Sigmoid colon (tissue), 7 donors: ENCODE measurements at regions of chr10 and their contacts with region 1.

Region 1: DNA sequence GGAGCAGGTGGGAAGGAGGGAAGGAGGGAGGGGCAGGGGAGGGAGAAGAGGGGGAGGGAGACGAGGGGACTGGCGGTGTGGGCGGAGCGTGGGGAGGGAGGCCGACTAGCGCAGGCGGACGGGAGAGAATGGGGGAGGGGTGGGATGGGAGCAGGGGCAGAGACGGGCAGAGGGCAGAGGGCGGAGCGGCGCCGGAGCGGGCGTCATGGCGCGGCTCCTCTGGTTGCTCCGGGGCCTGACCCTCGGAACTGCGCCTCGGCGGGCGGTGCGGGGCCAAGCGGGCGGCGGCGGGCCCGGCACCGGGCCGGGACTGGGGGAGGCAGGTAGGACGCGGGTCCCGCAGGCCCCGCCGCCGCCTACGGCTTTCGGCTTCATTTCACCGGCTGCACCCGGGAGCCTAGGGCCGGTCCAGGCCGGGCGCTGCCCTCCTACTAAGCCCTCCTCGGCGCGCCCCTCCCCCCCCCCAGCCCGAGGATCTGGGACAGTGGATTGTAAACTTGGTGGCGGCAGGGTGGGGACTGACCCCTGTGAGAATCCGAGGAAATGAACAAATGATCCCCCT is at the start of gene MSRB2:
- DNase-seq: peak; percentile 98
- H3K4me3 ChIP-seq: peak within 1 kb of the TSS; percentile 62 to 95 (median 79)
- H3K27ac ChIP-seq: peak within 1 kb of the TSS; percentile 90 to 99 (median 96)
- H3K4me1 ChIP-seq: peaks cover 0 to 17% (median 12%) of the 10 kb centered on the region in 4 donors
- H3K27me3 ChIP-seq: no peaks in the 10 kb centered on the region
- CTCF ChIP-seq: no peak
- EP300 ChIP-seq: no peak
- POLR2A ChIP-seq: peak; percentile 45 to 55
- total RNA-seq, gene MSRB2: 32.7 to 56.3 (median 47.0) TPM

Region 2: DNA sequence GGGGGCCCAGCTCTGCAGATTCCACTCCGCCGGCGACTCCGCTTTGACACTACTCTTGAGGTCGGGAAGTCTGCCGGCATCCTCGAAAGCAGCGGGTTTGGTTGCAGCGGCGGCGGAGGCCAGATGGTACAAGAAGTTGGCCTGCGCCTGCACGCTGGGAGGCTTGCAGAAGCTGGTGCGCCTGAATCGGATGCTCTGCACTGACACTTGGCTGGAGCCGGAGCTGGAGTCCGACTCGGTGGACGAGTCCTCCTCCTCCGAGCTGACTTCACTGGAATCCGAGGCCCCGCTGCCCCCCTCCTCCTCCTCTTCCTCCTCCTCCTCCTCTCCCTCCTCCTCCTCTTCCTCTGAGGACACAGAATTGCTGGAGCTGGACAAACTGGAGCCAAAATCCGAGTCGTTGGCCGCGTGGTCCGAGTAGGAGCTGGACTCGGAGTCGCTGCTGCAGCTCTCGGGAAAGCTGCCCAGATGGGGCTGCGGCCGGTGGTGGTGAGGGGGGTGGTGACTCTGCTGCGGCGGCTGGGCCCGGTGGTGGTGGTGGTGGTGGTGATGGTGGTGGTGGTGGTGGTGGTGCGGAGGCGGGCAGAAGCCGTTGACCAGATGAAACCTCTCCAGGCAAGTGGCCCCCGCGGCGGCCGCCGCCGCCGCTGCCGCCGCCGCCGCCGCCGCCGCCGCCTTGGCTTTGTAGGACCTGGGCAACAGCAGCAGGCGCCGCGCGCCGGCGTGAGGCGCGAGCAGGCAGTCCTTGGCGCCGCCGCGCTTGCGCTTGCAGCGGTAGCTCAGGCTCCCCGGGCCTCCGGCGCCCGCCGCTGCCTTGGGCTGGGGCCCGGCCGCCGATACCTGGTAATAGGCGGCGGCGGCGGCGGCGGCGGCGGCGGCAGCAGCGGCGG is 1579.0 kb before region 1 on chr10:
- intact Hi-C with region 1: loop called (anchors 5 kb)
- DNase-seq: peak; percentile 83
- H3K4me3 ChIP-seq: peak overlapping the region; percentile 45 to 68 (median 64)
- H3K27ac ChIP-seq: peak overlapping the region; percentile 86 to 99 (median 92)
- H3K4me1 ChIP-seq: peaks cover 0 to 73% (median 35%) of the 10 kb centered on the region in 4 donors
- H3K27me3 ChIP-seq: peaks cover 0 to 6% (median 0%) of the 10 kb centered on the region in 3 donors
- CTCF ChIP-seq: no peak
- EP300 ChIP-seq: no peak
- POLR2A ChIP-seq: no peak

Region 3: DNA sequence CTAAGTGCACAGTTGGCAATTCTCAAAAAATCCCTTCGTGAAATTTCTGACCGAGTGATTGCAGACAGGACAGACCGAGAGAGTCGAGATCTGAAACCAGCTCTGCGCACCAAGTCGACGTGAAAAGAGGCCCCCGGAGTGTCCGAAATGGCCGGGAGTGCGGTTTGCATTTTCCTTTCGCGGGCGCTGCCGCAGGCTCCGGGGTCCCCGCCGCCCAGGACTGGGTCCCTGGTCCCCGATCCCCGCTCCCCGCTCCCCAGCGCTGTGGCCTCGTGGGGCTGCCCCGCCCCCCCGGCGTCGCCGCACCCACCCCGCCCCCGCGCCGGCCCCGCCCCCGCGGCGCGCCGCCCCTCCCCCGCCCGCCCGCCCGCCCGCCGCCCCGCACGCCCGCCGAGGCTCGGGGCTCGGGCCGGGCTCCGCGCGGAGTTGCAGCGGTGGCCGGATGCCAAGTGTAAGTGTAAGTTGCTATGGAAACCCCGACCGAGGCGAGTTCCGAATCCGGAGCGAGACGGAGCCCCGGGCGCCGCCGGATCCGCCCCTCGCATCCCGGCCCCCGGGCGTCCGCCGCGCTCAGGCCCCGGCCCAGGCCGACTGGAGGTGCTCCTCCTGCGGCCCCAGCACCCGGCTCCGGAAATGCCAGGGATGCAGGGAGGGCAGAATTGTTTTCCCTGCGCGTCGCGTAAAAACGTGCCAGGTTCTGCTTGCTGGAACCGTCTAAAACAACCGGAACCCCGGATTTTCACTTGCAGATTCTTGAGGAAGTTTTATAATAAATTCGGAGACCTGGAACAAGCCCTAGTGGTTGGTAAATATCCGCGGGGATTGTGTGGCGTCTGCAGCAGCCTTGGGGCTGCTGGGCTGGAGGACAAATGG is 770.0 kb before region 1 on chr10:
- intact Hi-C with region 1: loop called (anchors 10 kb)
- DNase-seq: peak; percentile 87
- H3K4me3 ChIP-seq: peak overlapping the region; percentile 40 to 61 (median 60)
- H3K27ac ChIP-seq: peak overlapping the region; percentile 75 to 83 (median 80)
- H3K4me1 ChIP-seq: peaks cover 0 to 39% (median 35%) of the 10 kb centered on the region in 4 donors
- H3K27me3 ChIP-seq: peaks cover 0 to 19% (median 0%) of the 10 kb centered on the region in 3 donors
- CTCF ChIP-seq: no peak
- EP300 ChIP-seq: no peak
- POLR2A ChIP-seq: no peak

Region 4: GRCh38 chr10:22615819-22616499 is 479.5 kb before region 1 on chr10:
- intact Hi-C with region 1: no loop called
- DNase-seq: peak; percentile 73
- H3K4me3 ChIP-seq: peak overlapping the region in 1 of 4 donors; percentile 9
- H3K27ac ChIP-seq: peak overlapping the region in 2 of 4 donors; percentile 23 to 46
- H3K4me1 ChIP-seq: peaks cover 0 to 47% (median 24%) of the 10 kb centered on the region in 4 donors
- H3K27me3 ChIP-seq: no peaks in the 10 kb centered on the region
- CTCF ChIP-seq: no peak
- EP300 ChIP-seq: no peak
- POLR2A ChIP-seq: no peak

Region 5: DNA sequence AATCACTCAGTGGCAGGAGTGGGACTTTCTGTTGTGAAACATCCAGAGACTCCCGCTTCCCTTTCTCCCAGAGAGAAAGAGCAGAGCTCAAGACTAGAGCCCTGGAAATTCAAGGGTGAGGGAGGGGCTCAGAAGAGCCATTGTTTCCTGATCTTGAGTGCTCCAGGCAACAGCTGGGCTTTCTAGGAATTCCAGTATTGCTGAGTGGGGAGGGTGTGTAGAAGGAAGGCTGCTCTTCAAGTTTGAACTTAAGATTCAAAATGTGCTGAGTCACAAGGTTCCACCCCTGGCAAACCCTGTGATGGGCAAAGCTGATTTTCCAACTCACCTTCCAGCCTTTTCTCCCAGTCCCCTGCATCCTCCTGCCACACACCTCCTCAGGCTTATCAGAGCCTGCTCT is 42.4 kb before region 1 on chr10:
- intact Hi-C with region 1: no loop called
- DNase-seq: no peak
- H3K4me3 ChIP-seq: no peak overlapping the region
- H3K27ac ChIP-seq: no peak overlapping the region
- H3K4me1 ChIP-seq: no peaks in the 10 kb centered on the region
- H3K27me3 ChIP-seq: no peaks in the 10 kb centered on the region
- CTCF ChIP-seq: no peak
- EP300 ChIP-seq: no peak
- POLR2A ChIP-seq: no peak